HepG2 (cell line): ENCODE measurements at regions of chr1 and their contacts with region 1.

Region 1: DNA sequence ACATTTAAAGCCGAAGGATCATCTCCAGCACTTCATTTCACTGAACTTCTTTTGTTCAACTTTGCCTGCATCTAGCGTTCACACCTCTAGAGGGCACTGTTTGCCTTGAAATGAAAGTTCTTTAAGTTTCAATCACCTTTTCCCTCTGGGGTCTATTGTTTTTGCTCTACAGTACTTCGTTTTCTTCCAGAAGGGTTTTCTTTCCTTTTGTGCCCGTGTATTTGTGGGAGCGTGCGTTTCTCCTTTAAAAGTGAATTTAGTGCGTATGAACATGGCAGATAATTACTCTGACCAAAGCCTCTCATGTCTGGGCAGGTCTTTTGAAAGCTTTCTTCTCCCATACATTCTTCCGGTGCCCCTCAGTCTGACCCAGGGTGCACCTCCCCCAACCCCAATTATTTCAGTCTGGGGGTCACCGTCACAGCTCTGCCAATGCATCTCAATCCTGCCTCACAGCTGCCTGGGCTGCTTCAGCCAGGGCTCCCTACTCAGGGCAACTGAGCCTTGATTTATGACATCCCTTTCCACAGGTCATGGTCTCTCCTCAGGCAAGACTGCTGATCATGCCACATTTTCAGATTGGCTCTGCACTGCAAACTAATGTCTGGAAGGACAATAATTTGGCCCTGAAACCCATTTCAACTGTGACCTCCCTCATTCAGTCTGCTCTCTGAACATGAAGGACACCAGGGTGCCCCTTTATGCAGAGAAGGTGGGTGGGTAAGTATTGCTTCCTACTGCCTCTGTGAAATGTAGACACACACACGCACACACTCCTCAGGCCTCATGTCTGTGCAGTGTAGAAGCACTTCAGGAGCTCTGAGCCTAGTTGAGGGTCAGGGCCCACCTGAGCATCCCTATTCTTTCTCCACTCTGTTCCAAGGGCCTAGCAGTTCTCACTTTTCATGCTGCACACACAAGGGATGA is 88.6 kb downstream of the NUF2 start:
- DNase-seq: peak; percentile 51
- ATAC-seq: peak; percentile 59
- H3K4me3 ChIP-seq: no peak overlapping the region
- H3K27ac ChIP-seq: no peak overlapping the region
- H3K4me1 ChIP-seq: no peaks in the 10 kb centered on the region
- H3K27me3 ChIP-seq: peaks cover 0 to 7% of the 10 kb centered on the region in 2 experiments; a peak in 1 of 5 replicates
- CTCF ChIP-seq: peak; percentile 76
- EP300 ChIP-seq: no peak
- POLR2A ChIP-seq: no peak
- RAD21 ChIP-seq: peak; percentile 45; the same call in 1 of the 2 replicates

Region 2: DNA sequence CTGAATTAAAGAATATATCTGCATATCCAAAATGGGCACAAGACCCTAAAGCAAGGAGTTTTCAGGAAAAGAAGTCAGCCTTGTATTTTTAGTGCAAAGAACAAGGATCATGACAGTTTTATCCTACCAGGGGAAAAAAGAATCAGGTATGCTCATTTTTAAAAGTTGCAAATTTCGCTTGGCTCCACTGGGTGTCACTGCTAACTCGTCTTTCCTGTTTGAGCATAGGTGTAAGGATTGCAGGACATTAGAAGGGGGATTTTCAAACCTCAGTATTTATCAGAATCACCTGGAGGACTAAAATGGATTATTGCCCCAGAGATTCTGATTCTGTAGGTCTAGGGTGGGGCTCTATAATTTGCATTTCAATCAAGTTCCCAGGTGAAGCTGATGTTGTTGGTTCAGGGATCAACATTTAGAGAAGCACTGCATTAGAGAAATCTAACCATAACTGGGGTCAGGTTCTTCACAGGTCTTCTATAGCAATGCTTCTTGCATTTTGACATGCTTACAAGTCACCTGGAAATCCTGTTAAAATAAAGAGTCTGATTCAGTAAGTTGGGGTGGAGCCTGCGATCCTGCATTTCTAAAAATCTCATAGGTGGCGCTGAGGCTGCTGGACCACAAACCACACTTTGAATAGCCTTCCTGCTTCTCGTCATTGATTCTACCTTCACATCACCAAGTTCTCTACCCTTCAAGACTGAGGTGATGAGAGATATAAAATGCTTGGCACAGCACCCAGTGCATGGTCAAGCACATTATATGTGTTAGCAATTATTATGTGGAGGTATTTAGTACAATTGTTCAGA is 49.0 kb before region 1 on chr1:
- CTCF ChIA-PET with region 1: no interaction called
- POLR2A ChIA-PET with region 1: no interaction called
- in situ Hi-C with region 1: no loop called
- intact Hi-C with region 1: loop called (anchors 1 kb)
- DNase-seq: peak; percentile 12
- ATAC-seq: peak; percentile 66
- H3K4me3 ChIP-seq: no peak overlapping the region
- H3K27ac ChIP-seq: no peak overlapping the region
- H3K4me1 ChIP-seq: no peaks in the 10 kb centered on the region
- H3K27me3 ChIP-seq: no peaks in the 10 kb centered on the region
- CTCF ChIP-seq: peak; percentile 61
- EP300 ChIP-seq: no peak
- POLR2A ChIP-seq: no peak
- RAD21 ChIP-seq: no peak

Region 3: GRCh38 chr1:163440090-163440489 is 29.8 kb after region 1 on chr1:
- CTCF ChIA-PET with region 1: no interaction called
- POLR2A ChIA-PET with region 1: no interaction called
- in situ Hi-C with region 1: no loop called
- intact Hi-C with region 1: no loop called
- DNase-seq: no peak
- ATAC-seq: no peak
- H3K4me3 ChIP-seq: no peak overlapping the region
- H3K27ac ChIP-seq: no peak overlapping the region
- H3K4me1 ChIP-seq: no peaks in the 10 kb centered on the region
- H3K27me3 ChIP-seq: 0 out of 5 replicates have a peak, but pooled peaks cover 0 to 3% of the 10 kb centered on the region in 2 experiments
- CTCF ChIP-seq: no peak
- EP300 ChIP-seq: no peak
- POLR2A ChIP-seq: no peak
- RAD21 ChIP-seq: no peak

Region 4: DNA sequence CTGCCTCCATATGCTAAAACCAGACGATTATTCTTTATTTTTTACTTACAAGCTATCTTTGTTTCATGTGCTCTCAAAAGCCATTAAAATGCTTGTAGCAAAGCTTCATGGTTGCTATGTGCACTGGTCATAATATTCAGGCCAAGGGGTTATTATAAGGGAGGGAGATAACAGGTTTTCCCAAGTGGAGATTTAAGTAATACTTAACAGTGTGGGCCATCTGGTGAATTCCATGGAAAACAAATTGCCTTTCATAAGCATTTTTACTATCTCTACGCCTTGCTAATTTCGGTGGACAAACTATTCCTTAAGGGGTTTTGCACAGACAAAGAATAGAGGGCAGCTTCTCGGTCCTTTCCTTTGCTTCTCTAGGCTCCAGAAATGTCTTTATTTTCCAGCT is 49.2 kb after region 1 on chr1:
- CTCF ChIA-PET with region 1: no interaction called
- POLR2A ChIA-PET with region 1: no interaction called
- in situ Hi-C with region 1: no loop called
- intact Hi-C with region 1: no loop called
- DNase-seq: no peak
- ATAC-seq: no peak
- H3K4me3 ChIP-seq: no peak overlapping the region
- H3K27ac ChIP-seq: no peak overlapping the region
- H3K4me1 ChIP-seq: no peaks in the 10 kb centered on the region
- H3K27me3 ChIP-seq: no peaks in the 10 kb centered on the region
- CTCF ChIP-seq: no peak
- EP300 ChIP-seq: no peak
- POLR2A ChIP-seq: no peak
- RAD21 ChIP-seq: no peak

Region 5: GRCh38 chr1:163528710-163529348 is 118.5 kb after region 1 on chr1:
- CTCF ChIA-PET with region 1: no interaction called
- POLR2A ChIA-PET with region 1: no interaction called
- in situ Hi-C with region 1: no loop called
- intact Hi-C with region 1: loop called (anchors 2 kb)
- DNase-seq: peak; percentile 7
- ATAC-seq: peak; percentile 54
- H3K4me3 ChIP-seq: no peak overlapping the region
- H3K27ac ChIP-seq: no peak overlapping the region
- H3K4me1 ChIP-seq: 0 out of 2 replicates have a peak, but pooled peaks cover 5% of the 10 kb centered on the region
- H3K27me3 ChIP-seq: no peaks in the 10 kb centered on the region
- CTCF ChIP-seq: peak; percentile 33; the same call in 1 of the 2 replicates
- EP300 ChIP-seq: no peak
- POLR2A ChIP-seq: no peak
- RAD21 ChIP-seq: no peak

Region 6: GRCh38 chr1:164780863-164781262 is 1370.5 kb after region 1 on chr1:
- CTCF ChIA-PET with region 1: no interaction called
- POLR2A ChIA-PET with region 1: no interaction called
- in situ Hi-C with region 1: loop called (anchors 5 kb)
- intact Hi-C with region 1: no loop called
- DNase-seq: no peak
- ATAC-seq: no peak
- H3K4me3 ChIP-seq: no peak overlapping the region
- H3K27ac ChIP-seq: no peak overlapping the region
- H3K4me1 ChIP-seq: no peaks in the 10 kb centered on the region
- H3K27me3 ChIP-seq: peaks cover 0 to 3% of the 10 kb centered on the region in 2 experiments; a peak in 2 of 5 replicates
- CTCF ChIP-seq: no peak
- EP300 ChIP-seq: no peak
- POLR2A ChIP-seq: no peak
- RAD21 ChIP-seq: no peak

Region 7: GRCh38 chr1:164786980-164787833 is 1376.9 kb after region 1 on chr1:
- CTCF ChIA-PET with region 1: interaction called, 12 read pairs
- POLR2A ChIA-PET with region 1: no interaction called
- in situ Hi-C with region 1: loop called (anchors 5 kb)
- intact Hi-C with region 1: loop called (anchors 1 kb)
- DNase-seq: peak; percentile 45
- ATAC-seq: peak; percentile 99
- H3K4me3 ChIP-seq: no peak overlapping the region
- H3K27ac ChIP-seq: no peak overlapping the region
- H3K4me1 ChIP-seq: no peaks in the 10 kb centered on the region
- H3K27me3 ChIP-seq: peaks cover 0 to 3% of the 10 kb centered on the region in 2 experiments; a peak in 1 of 5 replicates
- CTCF ChIP-seq: peak; percentile 93
- EP300 ChIP-seq: no peak
- POLR2A ChIP-seq: no peak
- RAD21 ChIP-seq: peak; percentile 62

Region 8: DNA sequence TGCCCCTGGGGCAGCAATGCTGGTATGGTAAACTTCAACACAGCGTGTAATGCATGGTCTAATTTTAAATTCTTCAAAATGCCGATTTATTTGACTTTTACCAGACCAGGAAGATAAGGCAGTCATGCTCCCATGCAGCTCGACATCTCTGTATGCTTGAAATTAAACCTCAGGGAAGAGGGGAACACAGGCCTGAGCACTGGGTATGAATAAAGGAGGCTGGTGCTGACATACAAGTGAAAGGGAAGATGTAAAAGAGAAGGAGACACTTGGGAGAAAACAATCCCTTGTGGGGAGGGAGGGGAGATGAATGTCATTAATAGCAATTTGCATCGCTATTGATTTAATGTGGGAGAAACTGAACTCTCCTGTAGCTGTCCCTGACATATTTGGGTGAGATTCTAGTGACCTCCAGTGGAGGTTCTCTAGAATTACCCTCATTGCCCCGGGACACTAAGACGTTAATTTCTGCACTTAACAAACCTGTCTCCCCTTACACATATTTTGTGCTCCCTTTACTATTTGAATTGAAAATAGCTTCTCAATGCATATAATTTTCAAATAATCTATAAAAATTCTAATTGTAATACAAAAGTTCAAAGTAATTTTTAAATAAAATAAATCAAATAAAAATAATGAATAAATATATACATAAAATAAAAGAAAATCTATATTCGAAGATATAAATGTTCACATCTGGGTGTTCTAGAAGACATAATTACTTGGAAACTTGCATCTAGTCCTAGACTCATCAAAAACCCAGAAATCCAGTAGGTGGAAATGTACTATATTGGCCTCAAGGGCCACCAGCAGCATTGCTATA is 1663.1 kb after region 1 on chr1:
- CTCF ChIA-PET with region 1: interaction called, 5 read pairs
- POLR2A ChIA-PET with region 1: no interaction called
- in situ Hi-C with region 1: no loop called
- intact Hi-C with region 1: loop called (anchors 1 kb)
- DNase-seq: peak; percentile 43
- ATAC-seq: peak; percentile 82
- H3K4me3 ChIP-seq: no peak overlapping the region
- H3K27ac ChIP-seq: no peak overlapping the region
- H3K4me1 ChIP-seq: no peaks in the 10 kb centered on the region
- H3K27me3 ChIP-seq: no peaks in the 10 kb centered on the region; a peak in 1 of 5 replicates
- CTCF ChIP-seq: peak; percentile 67
- EP300 ChIP-seq: no peak
- POLR2A ChIP-seq: no peak
- RAD21 ChIP-seq: peak; percentile 24; the same call in 1 of the 2 replicates